ENCODE measurements at regions of chr17 and their contacts with region 1.

Region 1: GRCh38 chr17:18183334-18184142 is at the start of gene ALKBH5:
- DNase-seq: peak; percentile 95
- H3K4me3 Mint-ChIP-seq: peak within 1 kb of the TSS; percentile 98
- H3K27ac Mint-ChIP-seq: peak within 1 kb of the TSS; percentile 97
- H3K4me1 Mint-ChIP-seq: peaks cover 64% of the 10 kb centered on the region
- H3K27me3 Mint-ChIP-seq: no peaks in the 10 kb centered on the region
- total RNA-seq, gene ALKBH5: 127 and 128 TPM in 2 replicates

Region 2: DNA sequence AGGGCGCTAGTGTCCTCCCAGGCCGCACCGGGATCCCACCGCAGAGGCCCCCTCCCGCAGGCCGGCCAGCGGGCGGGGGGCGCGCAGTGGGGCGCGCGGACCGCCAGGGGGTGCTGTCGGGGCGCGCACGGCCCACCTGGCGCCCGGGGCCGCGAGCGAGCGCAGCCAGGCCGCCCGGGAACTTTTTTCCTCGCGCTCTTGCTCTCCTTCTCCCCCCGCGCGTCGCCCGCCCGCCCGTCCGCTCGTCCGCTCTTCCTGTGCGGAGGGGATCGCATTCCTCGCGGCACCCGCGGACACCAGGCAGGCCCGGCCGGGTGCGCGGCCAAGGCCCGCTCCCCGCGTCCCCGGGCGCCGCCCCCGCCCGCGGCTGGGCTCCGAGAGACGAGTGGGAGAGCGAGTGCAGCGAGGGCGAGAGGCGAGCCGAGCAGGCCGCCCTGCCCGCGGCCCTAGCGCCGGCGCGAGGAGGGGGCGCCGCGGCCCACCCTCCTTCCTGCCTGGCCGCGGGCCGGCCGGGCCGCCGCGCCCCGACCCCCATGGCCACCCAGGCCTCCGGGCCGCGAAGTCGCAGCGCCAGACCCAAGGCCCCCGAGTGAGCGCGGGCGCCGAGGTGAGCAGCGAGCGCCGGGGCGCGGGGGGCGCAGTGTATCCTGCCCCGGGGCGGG is 502.2 kb before region 1 on chr17 and contains the start of gene RAI1:
- intact Hi-C with region 1: loop called (anchors 5 kb)
- DNase-seq: peak; percentile 64
- H3K4me3 Mint-ChIP-seq: peak within 1 kb of the TSS; percentile 89
- H3K27ac Mint-ChIP-seq: peak within 1 kb of the TSS; percentile 84
- H3K4me1 Mint-ChIP-seq: peaks cover 22% of the 10 kb centered on the region
- H3K27me3 Mint-ChIP-seq: peaks cover 10% of the 10 kb centered on the region
- total RNA-seq, gene RAI1: 31.1 and 32.3 TPM in 2 replicates

Region 3: GRCh38 chr17:17836250-17836817 is 347.2 kb before region 1 on chr17:
- intact Hi-C with region 1: loop called (anchors 5 kb)
- DNase-seq: peak; percentile 95
- H3K4me3 Mint-ChIP-seq: peak overlapping the region; percentile 93
- H3K27ac Mint-ChIP-seq: peak overlapping the region; percentile 86
- H3K4me1 Mint-ChIP-seq: peaks cover 69% of the 10 kb centered on the region
- H3K27me3 Mint-ChIP-seq: no peaks in the 10 kb centered on the region

Region 4: DNA sequence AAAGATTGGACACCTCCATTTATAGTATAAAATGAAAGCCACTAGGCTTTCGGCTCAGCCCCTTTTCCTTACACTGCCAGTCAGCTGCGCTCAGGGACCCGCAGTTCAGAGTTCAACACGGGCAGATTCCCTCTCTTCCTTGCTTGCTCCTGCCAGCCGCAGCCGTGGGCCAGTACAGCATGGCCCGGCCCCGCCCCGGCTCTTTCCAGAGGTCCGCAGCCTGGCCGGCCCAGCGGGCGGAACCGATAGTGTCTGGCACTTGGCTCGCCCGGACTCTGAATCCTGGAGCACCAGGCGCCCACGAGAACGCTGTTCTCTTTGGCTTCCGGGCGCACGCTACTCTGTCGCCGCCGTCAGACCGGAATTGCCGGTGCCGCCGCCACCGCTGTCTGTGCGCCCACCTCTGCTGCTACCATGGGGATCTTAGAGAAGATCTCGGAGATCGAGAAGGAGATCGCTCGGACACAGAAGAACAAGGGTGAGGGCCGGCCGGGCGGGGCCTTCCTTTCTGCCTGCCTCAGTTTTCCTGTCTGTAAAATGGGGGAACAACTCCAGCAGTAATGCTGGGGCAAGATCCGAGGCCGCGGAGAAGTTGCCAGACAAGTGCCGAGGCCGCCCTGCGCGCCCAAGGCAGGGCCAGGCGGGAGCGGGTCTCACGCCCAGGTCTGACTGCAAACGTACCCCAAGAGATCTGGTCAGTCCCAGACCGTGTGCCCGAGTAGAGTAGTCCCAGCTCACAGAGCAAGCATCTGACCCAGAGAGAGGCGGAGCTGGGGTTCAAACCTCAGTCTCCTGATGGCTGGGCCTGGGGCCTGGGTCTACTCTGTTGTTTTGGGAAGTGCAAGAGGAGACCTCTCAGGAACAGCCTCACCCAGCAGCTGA is 95.7 kb before region 1 on chr17 and contains the start of gene DRG2:
- intact Hi-C with region 1: loop called (anchors 1 kb)
- DNase-seq: peak; percentile 84
- H3K4me3 Mint-ChIP-seq: peak within 1 kb of the TSS; percentile 95
- H3K27ac Mint-ChIP-seq: peak within 1 kb of the TSS; percentile 96
- H3K4me1 Mint-ChIP-seq: peaks cover 17% of the 10 kb centered on the region
- H3K27me3 Mint-ChIP-seq: no peaks in the 10 kb centered on the region
- total RNA-seq, gene DRG2: 67.5 and 69.2 TPM in 2 replicates

Region 5: DNA sequence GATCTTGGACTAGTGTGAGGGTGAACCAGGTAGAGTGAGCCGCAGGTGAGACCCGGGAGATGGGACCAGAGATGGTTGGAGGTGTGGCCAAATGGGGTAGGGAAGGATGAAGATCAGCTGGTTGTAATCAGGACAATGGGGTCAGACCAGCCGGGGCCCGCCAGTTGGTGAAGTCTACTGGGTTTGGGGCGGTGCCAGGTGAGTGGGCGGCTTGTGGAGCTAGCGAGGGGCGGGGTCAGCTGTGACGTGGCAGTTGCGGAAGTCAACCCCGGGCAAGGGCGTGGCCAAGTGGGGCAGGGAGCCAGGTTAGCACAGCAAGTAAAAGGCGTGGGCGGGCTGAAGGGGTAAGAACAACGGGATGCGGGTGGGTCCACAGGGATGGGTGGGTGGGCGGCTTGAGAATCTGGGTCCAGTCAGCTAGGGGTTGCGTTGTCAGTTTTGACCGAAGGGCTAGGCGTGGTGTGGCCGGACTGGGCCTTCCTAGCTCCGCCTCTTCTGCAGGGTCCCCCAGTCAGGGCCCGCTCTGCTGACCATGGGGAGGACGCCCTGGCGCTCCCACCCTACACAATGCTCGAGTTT is 25.4 kb before region 1 on chr17:
- intact Hi-C with region 1: loop called (anchors 1 kb)
- DNase-seq: peak; percentile 87
- H3K4me3 Mint-ChIP-seq: peak overlapping the region; percentile 77
- H3K27ac Mint-ChIP-seq: peak overlapping the region; percentile 79
- H3K4me1 Mint-ChIP-seq: peaks cover 4% of the 10 kb centered on the region
- H3K27me3 Mint-ChIP-seq: no peaks in the 10 kb centered on the region

Region 6: DNA sequence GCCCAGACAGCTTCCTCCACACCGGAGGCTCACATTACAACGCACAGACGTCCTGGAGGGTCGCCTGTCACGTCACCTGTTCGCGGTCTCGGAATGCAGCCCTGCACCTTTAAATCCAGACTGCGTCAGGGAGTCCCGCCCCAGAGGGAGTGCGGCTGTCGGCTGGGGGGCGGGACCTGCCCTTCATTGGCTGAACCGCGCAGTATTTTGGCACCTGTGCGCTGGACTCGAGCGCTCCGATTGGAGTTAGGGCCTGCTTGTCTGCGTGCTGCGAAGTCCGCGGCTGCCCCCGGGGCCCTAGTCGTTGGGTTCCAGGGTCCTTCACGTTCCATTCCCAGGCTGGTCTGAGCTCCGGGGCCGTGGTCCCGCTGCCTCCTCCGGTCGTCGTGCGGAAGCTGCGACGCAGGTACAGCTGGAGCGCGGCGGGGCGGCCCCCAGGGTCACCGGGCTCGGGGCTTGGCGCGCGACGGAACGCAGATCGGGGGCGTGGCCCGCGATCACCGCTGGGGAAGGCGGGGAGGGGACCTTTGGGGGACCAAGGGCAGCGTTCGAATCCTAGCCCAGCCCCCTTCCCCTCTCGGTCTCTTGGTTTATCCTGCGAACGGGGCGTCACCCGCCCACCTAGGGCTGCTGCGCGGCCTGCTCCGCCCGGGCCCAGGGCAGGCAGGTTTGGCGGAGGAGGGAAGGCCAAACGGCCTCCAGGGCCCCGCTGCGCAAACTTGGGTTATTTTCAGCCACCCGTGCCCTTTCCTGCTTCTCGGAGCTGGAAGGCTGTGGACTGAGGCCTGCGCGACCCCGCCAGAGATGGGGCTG is 77.0 kb after region 1 on chr17 and contains the start of gene MIEF2:
- intact Hi-C with region 1: loop called (anchors 1 kb)
- DNase-seq: peak; percentile 91
- H3K4me3 Mint-ChIP-seq: peak within 1 kb of the TSS; percentile 82
- H3K27ac Mint-ChIP-seq: peak within 1 kb of the TSS; percentile 76
- H3K4me1 Mint-ChIP-seq: peaks cover 31% of the 10 kb centered on the region
- H3K27me3 Mint-ChIP-seq: no peaks in the 10 kb centered on the region
- total RNA-seq, gene MIEF2: 5.8 and 7.0 TPM in 2 replicates

Region 7: DNA sequence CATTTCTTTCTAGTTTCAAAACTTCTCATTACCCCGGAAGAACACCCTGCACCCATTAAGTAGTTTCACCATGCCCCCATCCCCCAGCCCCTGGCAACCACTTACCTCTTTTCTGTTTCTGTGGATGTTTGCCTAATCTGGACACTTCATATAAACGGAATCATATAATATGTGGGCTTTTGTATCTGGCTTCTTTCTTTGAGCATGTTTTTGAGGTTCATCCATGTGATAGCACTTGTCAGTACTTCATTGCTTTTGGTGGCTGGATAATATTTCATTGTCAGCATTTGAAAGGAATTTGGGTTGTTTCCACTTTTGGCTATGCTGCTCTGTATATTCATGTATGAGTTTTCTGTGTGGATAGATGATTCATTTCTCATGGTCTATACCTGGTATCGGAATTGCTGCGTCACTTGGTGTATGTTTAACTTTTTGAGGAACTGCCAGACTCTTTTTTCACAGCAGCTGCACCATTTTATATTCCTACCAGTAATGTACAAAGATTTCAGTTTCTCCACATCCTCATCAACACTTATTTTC is 738.4 kb after region 1 on chr17:
- intact Hi-C with region 1: loop called (anchors 5 kb)
- DNase-seq: no peak
- H3K4me3 Mint-ChIP-seq: peak overlapping the region; percentile 75
- H3K27ac Mint-ChIP-seq: peak overlapping the region; percentile 97
- H3K4me1 Mint-ChIP-seq: peaks cover 52% of the 10 kb centered on the region
- H3K27me3 Mint-ChIP-seq: no peaks in the 10 kb centered on the region